ENCODE measurements at regions of chr3 and their contacts with region 1.

Region 1: DNA sequence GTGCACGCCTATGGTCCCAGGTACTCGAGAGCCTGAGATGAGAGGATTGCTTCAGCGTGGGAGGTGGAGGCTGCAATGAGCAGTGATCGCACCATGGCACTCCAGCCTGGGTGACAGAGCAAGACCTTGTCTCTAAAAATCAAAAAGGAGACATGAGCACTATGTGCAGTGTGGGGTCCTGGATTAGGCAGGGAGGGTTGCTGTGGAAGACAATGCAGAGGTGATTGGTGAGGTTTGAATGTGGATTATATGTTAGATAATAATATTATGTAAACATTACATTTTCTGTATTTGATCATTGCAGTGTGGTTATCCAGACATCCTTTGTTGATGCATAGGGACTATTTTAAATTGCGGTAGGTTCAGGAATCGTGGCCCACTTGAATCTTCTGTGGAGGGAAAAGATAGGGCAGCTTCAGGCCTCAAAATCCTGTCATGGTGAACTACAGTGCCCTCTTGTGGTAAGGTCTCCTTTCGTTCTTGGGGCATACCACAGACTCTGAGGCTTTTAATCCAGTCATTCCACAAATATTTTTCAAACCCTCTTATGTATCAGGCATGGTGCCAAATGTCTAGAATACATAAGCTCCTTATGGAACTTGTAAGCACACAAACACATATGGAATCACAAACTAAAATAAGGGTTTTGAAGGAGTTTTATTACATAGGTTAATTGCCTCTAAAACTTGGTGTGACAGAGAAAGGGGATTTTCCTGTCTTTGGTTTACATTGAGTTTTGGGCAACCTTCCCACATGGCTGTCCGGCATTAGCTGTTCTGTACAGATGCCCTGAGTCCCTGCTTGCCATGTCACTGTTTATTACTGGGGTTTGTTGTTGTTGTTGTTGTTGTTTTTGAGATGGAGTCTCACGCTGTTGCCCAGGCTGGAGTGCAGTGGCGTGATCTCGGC is 37.7 kb downstream of the GPD1L start:
- DNase-seq: peak; percentile 99
- ATAC-seq: peak; percentile 82
- H3K4me3 ChIP-seq: no peak overlapping the region
- H3K27ac ChIP-seq: 0 out of 2 replicates have a peak overlapping the region, but pooled peaks have one; percentile 16
- H3K4me1 ChIP-seq: peaks cover 42% of the 10 kb centered on the region
- H3K27me3 ChIP-seq: no peaks in the 10 kb centered on the region
- CTCF ChIP-seq: peak; percentile 93

Region 2: DNA sequence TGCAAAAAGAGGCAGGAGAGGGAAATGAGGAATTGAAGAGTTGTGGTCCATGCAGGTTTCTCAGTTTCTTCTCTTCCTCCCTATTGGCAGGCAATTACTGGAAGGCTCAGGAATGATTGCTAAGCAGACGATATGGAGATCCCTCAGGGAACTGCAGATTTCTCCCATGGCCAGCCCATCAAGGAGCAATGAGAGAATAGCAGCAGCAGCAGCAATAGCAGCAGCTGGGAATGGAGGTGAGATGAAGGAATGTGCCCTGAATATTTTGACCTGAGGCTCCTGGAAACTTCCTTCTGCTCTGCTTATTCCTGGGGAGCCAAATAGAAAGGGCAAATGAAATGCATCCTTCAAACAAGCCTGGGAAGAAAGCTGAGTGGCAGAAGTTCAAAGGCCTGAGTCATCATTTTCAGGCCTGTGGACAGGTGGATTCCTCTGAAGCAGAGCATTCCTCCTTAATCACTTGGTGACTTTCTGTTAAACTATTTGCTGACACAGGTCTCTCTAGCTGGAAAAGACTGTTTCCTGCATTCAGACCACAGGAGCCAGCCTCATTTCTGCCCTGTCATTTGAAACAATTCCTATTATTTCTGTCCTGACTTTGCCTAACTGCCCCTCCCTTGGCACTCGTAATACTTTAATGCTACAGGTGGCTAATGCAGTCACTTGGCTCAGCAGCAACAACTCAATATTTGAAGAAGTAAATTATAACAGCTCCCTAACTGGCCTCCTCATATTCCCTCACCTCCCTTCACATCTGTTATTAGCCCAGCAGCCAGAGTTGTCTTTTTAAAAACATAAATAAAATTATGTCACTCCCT is 1102.7 kb before region 1 on chr3:
- CTCF ChIA-PET with region 1: no interaction called
- POLR2A ChIA-PET with region 1: no interaction called
- intact Hi-C with region 1: no loop called
- DNase-seq: peak; percentile 99
- ATAC-seq: peak; percentile 93
- H3K4me3 ChIP-seq: no peak overlapping the region
- H3K27ac ChIP-seq: peak overlapping the region; percentile 83
- H3K4me1 ChIP-seq: peaks cover 44% of the 10 kb centered on the region
- H3K27me3 ChIP-seq: no peaks in the 10 kb centered on the region
- CTCF ChIP-seq: no peak

Region 3: DNA sequence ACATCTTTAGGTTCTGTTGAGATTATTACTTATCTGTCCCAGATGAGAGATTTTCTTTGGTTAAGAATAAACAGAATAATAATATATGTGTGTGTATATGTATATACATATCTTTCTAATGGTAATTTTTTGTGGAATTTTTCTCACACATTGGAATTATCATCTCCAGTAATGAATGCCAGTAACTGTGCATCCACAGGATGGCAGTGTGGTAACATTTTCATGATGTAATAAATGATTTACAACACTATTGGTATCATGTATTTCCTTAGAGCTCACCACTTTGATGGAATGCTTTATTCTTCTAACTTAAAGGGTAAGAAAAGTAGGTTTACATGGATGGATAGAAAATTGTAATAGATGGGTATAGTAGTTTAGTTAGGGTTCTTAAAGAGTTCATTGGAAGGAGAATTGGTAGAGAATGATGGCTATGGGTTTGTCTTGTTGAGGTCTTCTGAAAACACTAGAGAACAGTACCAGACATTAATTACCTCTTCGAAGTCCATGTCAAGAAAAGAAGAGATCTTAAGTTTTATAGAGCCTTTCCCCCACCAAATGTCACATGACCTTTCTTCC is 533.3 kb before region 1 on chr3:
- CTCF ChIA-PET with region 1: interaction called, 7 read pairs
- POLR2A ChIA-PET with region 1: no interaction called
- intact Hi-C with region 1: loop called (anchors 2 kb)
- DNase-seq: peak; percentile 77
- ATAC-seq: peak; percentile 54
- H3K4me3 ChIP-seq: no peak overlapping the region
- H3K27ac ChIP-seq: no peak overlapping the region
- H3K4me1 ChIP-seq: peaks cover 19% of the 10 kb centered on the region
- H3K27me3 ChIP-seq: no peaks in the 10 kb centered on the region
- CTCF ChIP-seq: peak; percentile 87

Region 4: GRCh38 chr3:31876331-31876730 is 267.8 kb before region 1 on chr3:
- CTCF ChIA-PET with region 1: no interaction called
- POLR2A ChIA-PET with region 1: no interaction called
- intact Hi-C with region 1: loop called (anchors 10 kb)
- DNase-seq: peak; percentile 81
- ATAC-seq: peak; percentile 88
- H3K4me3 ChIP-seq: peak overlapping the region; percentile 26; the same call in 1 of the 2 replicates
- H3K27ac ChIP-seq: peak overlapping the region; percentile 63
- H3K4me1 ChIP-seq: peaks cover 17% of the 10 kb centered on the region
- H3K27me3 ChIP-seq: no peaks in the 10 kb centered on the region
- CTCF ChIP-seq: no peak

Region 5: GRCh38 chr3:32045091-32045964 is 98.8 kb before region 1 on chr3:
- CTCF ChIA-PET with region 1: interaction called, 11 read pairs
- POLR2A ChIA-PET with region 1: no interaction called
- intact Hi-C with region 1: loop called (anchors 1 kb)
- DNase-seq: peak; percentile 92
- ATAC-seq: peak; percentile 87
- H3K4me3 ChIP-seq: peak overlapping the region; percentile 31
- H3K27ac ChIP-seq: peak overlapping the region; percentile 91
- H3K4me1 ChIP-seq: peaks cover 27% of the 10 kb centered on the region
- H3K27me3 ChIP-seq: no peaks in the 10 kb centered on the region
- CTCF ChIP-seq: no peak

Region 6: DNA sequence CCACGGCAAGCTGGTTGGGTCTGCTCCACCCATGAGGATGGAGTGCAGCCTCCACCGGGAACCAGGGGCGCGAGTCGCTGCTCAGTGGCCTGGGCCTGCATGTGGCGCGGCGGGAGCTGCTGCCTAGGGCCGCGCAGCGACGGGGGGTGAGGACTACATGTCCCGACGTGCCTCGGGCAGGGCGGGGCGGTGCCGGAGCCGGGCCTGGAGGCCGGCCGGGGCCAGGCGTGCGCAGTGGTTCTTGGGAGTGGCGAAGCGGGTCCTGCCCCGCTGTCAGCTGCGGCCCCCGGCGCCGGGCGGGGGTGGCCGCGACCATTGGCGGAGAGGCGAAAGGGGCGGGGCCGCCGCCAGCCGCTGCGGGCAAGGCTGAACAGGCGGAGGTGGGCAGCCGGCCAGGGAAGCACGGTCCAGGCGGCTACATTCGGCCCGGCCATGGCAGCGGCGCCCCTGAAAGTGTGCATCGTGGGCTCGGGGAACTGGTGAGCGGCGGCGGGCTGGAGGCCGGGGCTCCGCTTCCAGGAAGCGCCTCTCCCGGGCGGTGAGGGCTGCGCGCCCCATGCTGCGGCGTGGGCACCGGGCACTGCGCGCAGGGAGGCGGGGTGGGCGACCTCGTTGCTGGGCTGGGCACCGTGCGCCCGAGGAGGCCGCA is 37.7 kb before region 1 on chr3 and contains the start of gene GPD1L:
- CTCF ChIA-PET with region 1: interaction called, 4 read pairs
- POLR2A ChIA-PET with region 1: no interaction called
- intact Hi-C with region 1: loop called (anchors 2 kb)
- DNase-seq: peak; percentile 98
- ATAC-seq: peak; percentile 90
- H3K4me3 ChIP-seq: peak within 1 kb of the TSS; percentile 93
- H3K27ac ChIP-seq: peak within 1 kb of the TSS; percentile 86
- H3K4me1 ChIP-seq: peaks cover 51% of the 10 kb centered on the region
- H3K27me3 ChIP-seq: no peaks in the 10 kb centered on the region
- CTCF ChIP-seq: no peak
- total RNA-seq, gene GPD1L: 33.7 and 42.8 TPM in 2 replicates

Measured in PC-3 (cell line).